Thyroid gland (tissue), 4 donors: ENCODE measurements at regions of chr21 and their contacts with region 1.

Region 1: DNA sequence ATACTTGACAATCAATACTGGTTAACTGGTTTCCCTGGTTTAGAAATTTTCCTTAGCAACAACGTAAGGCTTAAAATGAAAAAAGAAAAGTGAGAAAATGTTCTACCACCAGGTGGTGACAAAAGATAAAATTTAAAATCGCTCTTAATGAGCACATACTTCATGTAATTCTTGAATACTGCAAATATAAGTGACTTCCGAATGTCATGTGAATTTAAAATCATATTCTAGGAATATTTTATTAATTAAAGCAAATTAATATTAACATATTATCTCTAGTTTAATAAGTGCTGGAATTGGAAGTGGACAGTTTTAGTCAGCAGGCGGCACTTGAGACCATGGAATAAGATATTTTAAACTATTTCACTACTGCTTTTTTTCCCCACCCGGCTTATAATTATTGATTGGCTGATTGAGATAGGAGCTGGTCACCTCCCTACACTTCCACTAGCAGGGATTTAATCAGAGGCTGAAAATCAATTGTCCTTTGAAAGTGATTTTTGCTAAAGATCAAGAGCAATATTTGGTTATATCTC is 5.0 kb upstream of the ADAMTS1 start:
- DNase-seq: peak; percentile 9 to 13
- H3K4me3 ChIP-seq: no peak overlapping the region
- H3K27ac ChIP-seq: no peak overlapping the region
- H3K4me1 ChIP-seq: no peaks in the 10 kb centered on the region
- H3K27me3 ChIP-seq: no peaks in the 10 kb centered on the region
- CTCF ChIP-seq: peak; percentile 27 to 99 (median 64)
- POLR2A ChIP-seq: no peak

Region 2: GRCh38 chr21:26967062-26967913 is 117.1 kb after region 1 on chr21 and contains the start of gene ADAMTS5:
- intact Hi-C with region 1: loop called (anchors 10 kb)
- DNase-seq: peak; percentile 59 to 67
- H3K4me3 ChIP-seq: peak within 1 kb of the TSS; percentile 43 to 65 (median 56)
- H3K27ac ChIP-seq: peak within 1 kb of the TSS; percentile 81 to 89 (median 84)
- H3K4me1 ChIP-seq: peaks cover 15 to 19% of the 10 kb centered on the region in 2 donors
- H3K27me3 ChIP-seq: no peaks in the 10 kb centered on the region
- CTCF ChIP-seq: no peak
- POLR2A ChIP-seq: peak in 1 of 2 donors; percentile 57
- total RNA-seq, gene ADAMTS5: 13.5 to 29.3 (median 21.3) TPM

Region 3: GRCh38 chr21:27564684-27565301 is 714.6 kb after region 1 on chr21:
- intact Hi-C with region 1: loop called (anchors 5 kb)
- DNase-seq: peak; percentile 62 to 64
- H3K4me3 ChIP-seq: no peak overlapping the region
- H3K27ac ChIP-seq: no peak overlapping the region
- H3K4me1 ChIP-seq: no peaks in the 10 kb centered on the region
- H3K27me3 ChIP-seq: no peaks in the 10 kb centered on the region
- CTCF ChIP-seq: peak; percentile 29 to 73 (median 52)
- POLR2A ChIP-seq: no peak

Region 4: DNA sequence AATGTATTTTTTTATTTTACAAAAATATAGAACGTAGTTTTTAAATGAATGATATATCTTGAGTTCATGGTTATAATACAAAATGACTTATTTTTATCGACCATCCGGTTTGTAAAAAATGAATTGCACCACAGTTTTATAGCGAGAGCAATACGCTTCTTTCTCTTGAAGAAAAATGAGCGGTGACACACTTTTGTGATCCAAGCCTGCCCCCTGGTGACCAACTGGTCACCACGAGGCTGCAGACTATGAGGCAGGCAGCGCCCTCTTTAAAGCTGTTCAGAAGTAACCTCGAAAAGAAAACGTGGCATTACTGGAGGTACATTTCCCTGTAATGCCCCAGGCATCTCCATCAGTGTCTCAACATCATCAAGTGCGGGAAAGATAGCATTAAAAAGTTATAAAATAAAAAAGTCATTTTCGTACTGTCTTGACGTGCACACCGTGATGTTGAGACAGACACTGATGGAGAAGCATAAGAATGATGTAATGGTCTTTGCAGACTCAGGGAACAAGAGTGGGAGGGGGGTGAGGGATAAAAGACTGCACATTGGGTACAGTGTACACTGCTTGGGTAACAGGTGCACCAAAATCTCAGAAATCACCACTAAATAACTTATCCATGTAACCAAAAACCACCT is 850.9 kb after region 1 on chr21:
- intact Hi-C with region 1: loop called (anchors 2 kb)
- DNase-seq: peak; percentile 84 to 90
- H3K4me3 ChIP-seq: no peak overlapping the region
- H3K27ac ChIP-seq: no peak overlapping the region
- H3K4me1 ChIP-seq: no peaks in the 10 kb centered on the region
- H3K27me3 ChIP-seq: no peaks in the 10 kb centered on the region
- CTCF ChIP-seq: peak; percentile 48 to 85 (median 76)
- POLR2A ChIP-seq: no peak